Psoas muscle (tissue), 8 donors: ENCODE measurements at regions of chr20 and their contacts with region 1.

Region 1: GRCh38 chr20:24651171-24651975 is 181.9 kb downstream of the SYNDIG1 start:
- DNase-seq: no peak
- ATAC-seq: no peak
- H3K4me3 ChIP-seq: no peak overlapping the region
- H3K27ac ChIP-seq: no peak overlapping the region
- H3K4me1 ChIP-seq: no peaks in the 10 kb centered on the region
- H3K27me3 ChIP-seq: peaks cover 0 to 4% (median 0%) of the 10 kb centered on the region in 3 donors
- CTCF ChIP-seq: no peak

Region 2: DNA sequence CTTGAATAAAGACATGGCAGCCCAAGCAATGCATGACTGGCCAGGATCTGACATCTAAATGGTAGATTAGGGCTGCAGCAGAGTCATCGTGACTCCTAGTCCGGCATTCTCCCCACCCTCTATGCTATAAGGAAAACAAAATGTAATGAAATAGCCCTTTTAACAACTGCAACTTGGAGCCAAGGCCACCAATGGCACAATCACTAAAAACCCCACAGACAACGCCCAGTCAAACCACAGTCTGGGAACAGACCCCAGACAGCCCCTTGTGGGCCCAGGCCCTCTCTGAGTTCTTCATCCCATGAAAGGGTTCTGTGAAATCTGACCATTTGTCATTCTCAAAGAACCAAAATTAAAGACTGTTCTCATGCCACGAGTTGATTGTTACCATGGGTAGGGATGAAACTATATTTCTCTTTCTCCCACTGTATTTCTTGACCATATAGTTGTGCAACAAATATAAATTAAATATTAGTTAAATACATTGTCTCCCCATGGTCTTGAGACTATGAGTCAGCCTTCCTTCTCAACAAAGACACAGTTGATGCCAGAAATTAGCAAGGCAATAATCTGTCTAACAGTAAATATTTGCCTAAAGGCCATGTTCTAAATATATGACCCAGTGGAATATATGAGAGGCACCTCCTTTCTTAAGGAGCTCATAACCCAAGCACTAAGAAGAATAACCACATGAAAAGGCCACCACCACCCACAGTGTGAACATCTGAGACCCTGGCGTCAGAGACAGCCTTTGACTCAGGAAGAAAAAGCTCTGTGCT is 1701.9 kb before region 1 on chr20:
- intact Hi-C with region 1: loop called in 1 of 2 experiments (anchors 10 kb)
- DNase-seq: no peak
- ATAC-seq: no peak
- H3K4me3 ChIP-seq: no peak overlapping the region
- H3K27ac ChIP-seq: no peak overlapping the region
- H3K4me1 ChIP-seq: no peaks in the 10 kb centered on the region
- H3K27me3 ChIP-seq: no peaks in the 10 kb centered on the region
- CTCF ChIP-seq: no peak

Region 3: GRCh38 chr20:24590178-24590982 is 61.0 kb before region 1 on chr20:
- intact Hi-C with region 1: loop called in 1 of 2 experiments (anchors 10 kb)
- DNase-seq: no peak
- ATAC-seq: no peak
- H3K4me3 ChIP-seq: no peak overlapping the region
- H3K27ac ChIP-seq: no peak overlapping the region
- H3K4me1 ChIP-seq: no peaks in the 10 kb centered on the region
- H3K27me3 ChIP-seq: no peaks in the 10 kb centered on the region
- CTCF ChIP-seq: no peak